ENCODE measurements at regions of chr11 and their contacts with region 1.

Region 1: DNA sequence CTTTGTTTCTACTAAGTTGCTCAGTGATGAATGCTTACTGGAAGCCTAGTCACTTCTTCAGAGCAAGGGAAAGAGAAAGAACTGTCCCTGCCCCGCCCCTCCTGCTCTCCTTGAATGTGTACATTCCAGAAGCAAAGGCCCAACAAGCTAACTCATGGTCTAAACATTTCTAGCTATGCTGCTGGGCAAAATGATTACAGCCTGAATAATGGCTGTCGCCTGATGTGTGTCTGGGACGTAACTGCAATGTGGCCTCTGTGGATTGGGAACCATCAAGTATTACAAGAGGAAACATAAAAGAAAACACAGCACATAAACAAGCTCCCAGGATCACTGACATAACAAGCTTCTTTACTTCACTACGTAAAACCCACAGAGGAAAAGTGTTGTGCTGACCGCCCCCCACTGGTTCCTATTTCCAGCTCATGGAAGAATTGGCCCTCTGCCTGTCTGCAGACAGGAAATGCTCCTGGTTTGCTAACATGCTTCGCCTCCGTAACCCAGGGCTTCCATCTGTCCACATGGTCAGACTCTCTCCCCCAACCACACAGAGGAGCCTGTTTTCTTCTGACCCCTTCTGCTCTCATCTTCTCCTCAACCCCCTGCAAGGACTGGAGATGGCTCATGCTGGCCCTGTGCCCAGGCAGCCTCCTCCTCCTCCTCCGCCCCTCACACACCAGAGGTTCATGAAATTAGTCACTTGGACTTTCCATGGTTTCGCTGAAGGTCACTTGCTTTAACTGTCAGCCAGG is 187.2 kb downstream of the MAML2 start:
- DNase-seq: peak; percentile 93
- H3K4me3 Mint-ChIP-seq: peak overlapping the region; percentile 51
- H3K27ac Mint-ChIP-seq: peak overlapping the region; percentile 88
- H3K4me1 Mint-ChIP-seq: peaks cover 29% of the 10 kb centered on the region
- H3K27me3 Mint-ChIP-seq: no peaks in the 10 kb centered on the region
- CTCF ChIP-seq: peak; percentile 28

Region 2: GRCh38 chr11:96122601-96123074 is 33.2 kb before region 1 on chr11:
- CTCF ChIA-PET with region 1: interaction called, 5 read pairs
- POLR2A ChIA-PET with region 1: interaction called, 12 read pairs
- intact Hi-C with region 1: no loop called
- DNase-seq: peak; percentile 76
- H3K4me3 Mint-ChIP-seq: peak overlapping the region; percentile 28
- H3K27ac Mint-ChIP-seq: peak overlapping the region; percentile 74
- H3K4me1 Mint-ChIP-seq: peaks cover 14% of the 10 kb centered on the region
- H3K27me3 Mint-ChIP-seq: no peaks in the 10 kb centered on the region
- CTCF ChIP-seq: no peak